ENCODE measurements at regions of chr1 and their contacts with region 1.

Region 1: DNA sequence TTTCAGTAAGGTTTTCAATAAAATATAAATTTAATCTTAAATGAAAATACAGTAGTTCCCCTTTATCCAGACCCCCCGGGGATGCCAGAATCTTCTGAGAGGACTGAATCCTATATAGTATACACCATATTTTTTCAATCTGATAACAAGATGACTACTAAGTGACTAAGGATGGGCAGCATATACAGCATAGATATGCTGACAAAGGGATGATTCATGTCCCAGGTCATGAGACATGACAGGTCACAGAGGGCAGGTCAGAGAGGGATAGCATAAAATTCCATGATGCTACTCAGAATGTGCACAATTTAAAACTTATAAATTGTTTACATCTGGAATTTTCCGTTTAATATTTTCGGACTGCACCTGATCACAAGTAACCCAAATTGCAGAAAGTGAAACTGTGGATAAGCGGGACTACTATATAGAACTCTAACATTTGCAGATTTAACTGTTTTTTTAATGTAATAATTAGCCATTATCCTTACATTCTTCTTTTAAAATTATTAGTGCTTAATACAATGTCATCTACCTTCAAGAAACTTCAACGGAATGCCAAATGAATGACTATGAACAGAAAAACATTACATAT is 48.8 kb downstream of the LRRC40 start:
- DNase-seq: no peak
- H3K4me3 ChIP-seq: no peak overlapping the region
- H3K27ac ChIP-seq: no peak overlapping the region
- H3K27me3 ChIP-seq: no peaks in the 10 kb centered on the region
- CTCF ChIP-seq: no peak

Region 2: DNA sequence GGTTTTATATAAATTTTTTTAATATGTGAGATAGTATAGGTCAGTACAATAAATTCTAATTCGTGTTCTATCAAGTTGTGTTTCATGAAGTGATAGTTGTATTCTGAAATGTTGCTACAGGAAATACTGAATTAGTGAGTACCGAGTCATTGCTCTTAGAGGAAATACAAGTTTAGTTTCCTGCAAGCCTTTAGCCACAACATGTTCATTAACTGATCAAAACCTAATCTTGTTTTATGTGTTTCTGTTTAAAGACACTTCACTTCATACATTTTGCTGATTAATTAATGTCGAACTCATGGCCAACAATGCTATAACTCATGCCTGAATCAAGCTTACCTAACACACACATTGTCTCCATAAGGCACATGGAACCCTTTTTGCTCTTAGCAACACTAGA is 545.3 kb before region 1 on chr1:
- CTCF ChIA-PET with region 1: no interaction called
- POLR2A ChIA-PET with region 1: no interaction called
- DNase-seq: no peak
- H3K4me3 ChIP-seq: no peak overlapping the region
- H3K27ac ChIP-seq: no peak overlapping the region
- H3K27me3 ChIP-seq: no peaks in the 10 kb centered on the region
- CTCF ChIP-seq: no peak

Region 3: GRCh38 chr1:69814926-69815325 is 341.7 kb before region 1 on chr1:
- CTCF ChIA-PET with region 1: no interaction called
- POLR2A ChIA-PET with region 1: no interaction called
- DNase-seq: no peak
- H3K4me3 ChIP-seq: no peak overlapping the region
- H3K27ac ChIP-seq: no peak overlapping the region
- H3K27me3 ChIP-seq: no peaks in the 10 kb centered on the region
- CTCF ChIP-seq: no peak

Region 4: GRCh38 chr1:70043806-70044205 is 112.8 kb before region 1 on chr1:
- CTCF ChIA-PET with region 1: no interaction called
- POLR2A ChIA-PET with region 1: no interaction called
- DNase-seq: peak; percentile 50
- H3K4me3 ChIP-seq: no peak overlapping the region
- H3K27ac ChIP-seq: no peak overlapping the region
- H3K27me3 ChIP-seq: no peaks in the 10 kb centered on the region
- CTCF ChIP-seq: no peak

Region 5: DNA sequence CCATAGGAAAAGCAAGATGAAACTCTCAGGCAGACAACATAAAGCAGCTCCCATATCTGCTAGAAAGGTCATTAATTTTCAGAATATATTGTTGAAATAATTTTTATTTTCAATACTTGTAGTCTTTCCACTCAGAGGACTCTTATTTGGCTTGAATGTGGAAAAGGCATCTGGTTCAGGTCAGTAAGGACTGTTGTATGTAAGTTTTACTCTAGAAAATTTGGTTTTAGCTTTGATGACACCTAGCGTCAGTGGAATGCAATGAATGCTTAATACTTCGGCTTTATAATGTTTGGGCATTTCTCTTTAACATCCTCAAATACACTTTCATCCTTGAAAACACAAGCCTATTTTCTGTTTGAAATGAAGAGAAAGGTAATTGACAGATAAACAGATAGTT is 14.6 kb before region 1 on chr1:
- CTCF ChIA-PET with region 1: interaction called, 15 read pairs
- POLR2A ChIA-PET with region 1: no interaction called
- DNase-seq: no peak
- H3K4me3 ChIP-seq: no peak overlapping the region
- H3K27ac ChIP-seq: no peak overlapping the region
- H3K27me3 ChIP-seq: no peaks in the 10 kb centered on the region
- CTCF ChIP-seq: peak; percentile 60

Region 6: DNA sequence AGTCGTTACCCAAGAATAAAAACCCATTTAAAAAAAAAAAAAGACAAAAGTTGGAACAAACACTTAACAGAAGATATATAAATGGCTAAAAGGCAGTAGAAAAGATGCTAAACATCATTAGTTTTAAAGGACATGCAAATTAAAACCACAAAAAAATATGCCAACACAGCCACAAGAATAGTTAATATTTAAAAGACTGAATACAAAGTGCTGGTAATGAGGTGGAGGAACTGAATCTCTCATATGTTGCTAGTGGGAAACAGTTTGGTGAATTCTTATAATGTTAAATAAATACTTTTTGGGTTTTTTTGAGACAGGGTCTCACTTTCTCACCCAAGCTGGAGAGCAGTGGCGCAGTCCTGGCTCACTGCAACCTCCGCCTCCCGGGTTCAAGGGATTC is 38.7 kb after region 1 on chr1:
- CTCF ChIA-PET with region 1: no interaction called
- POLR2A ChIA-PET with region 1: no interaction called
- DNase-seq: no peak
- H3K4me3 ChIP-seq: no peak overlapping the region
- H3K27ac ChIP-seq: no peak overlapping the region
- H3K27me3 ChIP-seq: no peaks in the 10 kb centered on the region
- CTCF ChIP-seq: no peak

Measured in AG04450 (cell line).